ENCODE measurements at regions of chr9 and their contacts with region 1.

Region 1: GRCh38 chr9:77575785-77576184 is 72.3 kb downstream of the GNA14 start:
- DNase-seq: no peak
- H3K4me3 ChIP-seq: no peak overlapping the region
- H3K27ac ChIP-seq: no peak overlapping the region
- H3K4me1 ChIP-seq: no peaks in the 10 kb centered on the region
- H3K27me3 ChIP-seq: no peaks in the 10 kb centered on the region
- CTCF ChIP-seq: no peak
- POLR2A ChIP-seq: no peak

Region 2: DNA sequence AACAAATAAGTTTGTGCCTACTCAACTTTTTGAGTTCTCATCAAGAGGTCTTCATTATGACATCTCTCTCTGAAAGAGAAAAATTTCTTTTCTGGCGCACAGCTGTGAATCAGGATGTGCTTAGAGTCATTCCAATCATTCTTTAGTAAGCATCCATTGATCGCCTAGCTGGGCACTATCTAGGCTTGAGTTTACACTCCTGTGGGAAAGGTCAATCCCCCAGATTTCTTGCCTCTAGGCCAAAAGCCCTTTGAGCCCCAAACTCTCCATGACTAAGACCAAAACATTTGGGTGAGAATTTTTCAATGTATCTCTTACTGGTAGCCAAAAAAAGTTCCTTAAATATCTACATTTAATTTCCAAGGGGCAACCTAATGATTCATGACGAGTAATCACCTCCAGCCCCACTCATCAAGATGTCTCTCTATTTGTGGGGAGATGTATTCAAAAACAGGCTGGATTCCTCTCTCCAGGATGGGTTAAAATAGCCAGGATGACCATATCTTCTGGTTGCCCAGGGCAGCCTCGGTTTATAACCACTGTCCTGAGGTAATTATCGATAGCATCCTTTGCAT is 29.3 kb before region 1 on chr9:
- intact Hi-C with region 1: loop called (anchors 2 kb)
- DNase-seq: no peak
- H3K4me3 ChIP-seq: no peak overlapping the region
- H3K27ac ChIP-seq: no peak overlapping the region
- H3K4me1 ChIP-seq: no peaks in the 10 kb centered on the region
- H3K27me3 ChIP-seq: no peaks in the 10 kb centered on the region
- CTCF ChIP-seq: no peak
- POLR2A ChIP-seq: no peak

Region 3: GRCh38 chr9:77632652-77633051 is 56.9 kb after region 1 on chr9:
- intact Hi-C with region 1: loop called (anchors 2 kb)
- DNase-seq: no peak
- H3K4me3 ChIP-seq: no peak overlapping the region
- H3K27ac ChIP-seq: no peak overlapping the region
- H3K4me1 ChIP-seq: no peaks in the 10 kb centered on the region
- H3K27me3 ChIP-seq: no peaks in the 10 kb centered on the region
- CTCF ChIP-seq: no peak
- POLR2A ChIP-seq: no peak

Measured in prostate gland (tissue), 2 donors.